GM10248 (cell line): ENCODE measurements at regions of chr7 and their contacts with region 1.

Region 1: DNA sequence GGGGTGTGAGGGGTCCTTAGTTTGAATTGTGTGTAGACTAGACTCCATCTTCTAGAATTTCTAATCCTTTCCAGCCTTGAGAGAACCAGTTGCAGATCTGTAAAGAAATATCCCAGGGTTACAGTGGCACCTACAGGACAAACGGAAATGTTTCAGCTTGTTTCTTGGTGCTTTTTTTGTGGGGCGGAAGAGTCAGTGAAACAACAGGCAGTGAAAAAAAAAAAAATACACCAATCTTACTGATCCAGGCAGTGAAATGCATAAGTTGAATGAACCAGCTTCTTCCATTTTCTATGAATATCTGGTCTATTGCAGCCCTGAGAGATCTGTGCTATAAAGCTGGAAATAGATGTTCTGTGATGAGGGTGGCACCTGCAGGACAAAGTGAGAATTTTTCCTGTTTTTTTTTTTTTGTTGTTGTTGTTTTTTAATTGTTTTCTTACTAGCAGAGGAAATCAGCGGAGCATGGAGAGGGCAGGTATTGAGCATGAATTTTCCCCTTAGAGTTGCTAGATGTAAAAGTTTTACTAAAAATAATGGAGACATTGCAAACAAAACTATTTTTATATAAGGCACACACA is 81.9 kb upstream of the DYNC1I1 start:
- DNase-seq: peak; percentile 13
- CTCF ChIP-seq: peak; percentile 51

Region 2: GRCh38 chr7:95517458-95517857 is 173.0 kb before region 1 on chr7:
- CTCF ChIA-PET with region 1: interaction called, 198 read pairs
- POLR2A ChIA-PET with region 1: interaction called, 4 read pairs
- DNase-seq: no peak
- CTCF ChIP-seq: no peak

Region 3: GRCh38 chr7:95545078-95545498 is 145.4 kb before region 1 on chr7:
- CTCF ChIA-PET with region 1: interaction called, 18 read pairs
- POLR2A ChIA-PET with region 1: interaction called, 6 read pairs
- DNase-seq: no peak
- CTCF ChIP-seq: peak; percentile 31

Region 4: GRCh38 chr7:95700917-95701316 is 10.5 kb after region 1 on chr7:
- CTCF ChIA-PET with region 1: interaction called, 12 read pairs
- POLR2A ChIA-PET with region 1: no interaction called
- DNase-seq: no peak
- CTCF ChIP-seq: no peak